ENCODE measurements at regions of chr6 and their contacts with region 1.

Region 1: GRCh38 chr6:138001750-138002349 is 105.4 kb downstream of the PERP start:
- DNase-seq: peak in 4 of 5 donors; percentile 54 to 69 (median 60)
- H3K4me3 ChIP-seq: no peak overlapping the region
- H3K27ac ChIP-seq: no peak overlapping the region
- H3K4me1 ChIP-seq: no peaks in the 10 kb centered on the region
- H3K27me3 ChIP-seq: no peaks in the 10 kb centered on the region
- CTCF ChIP-seq: peak; percentile 84

Region 2: DNA sequence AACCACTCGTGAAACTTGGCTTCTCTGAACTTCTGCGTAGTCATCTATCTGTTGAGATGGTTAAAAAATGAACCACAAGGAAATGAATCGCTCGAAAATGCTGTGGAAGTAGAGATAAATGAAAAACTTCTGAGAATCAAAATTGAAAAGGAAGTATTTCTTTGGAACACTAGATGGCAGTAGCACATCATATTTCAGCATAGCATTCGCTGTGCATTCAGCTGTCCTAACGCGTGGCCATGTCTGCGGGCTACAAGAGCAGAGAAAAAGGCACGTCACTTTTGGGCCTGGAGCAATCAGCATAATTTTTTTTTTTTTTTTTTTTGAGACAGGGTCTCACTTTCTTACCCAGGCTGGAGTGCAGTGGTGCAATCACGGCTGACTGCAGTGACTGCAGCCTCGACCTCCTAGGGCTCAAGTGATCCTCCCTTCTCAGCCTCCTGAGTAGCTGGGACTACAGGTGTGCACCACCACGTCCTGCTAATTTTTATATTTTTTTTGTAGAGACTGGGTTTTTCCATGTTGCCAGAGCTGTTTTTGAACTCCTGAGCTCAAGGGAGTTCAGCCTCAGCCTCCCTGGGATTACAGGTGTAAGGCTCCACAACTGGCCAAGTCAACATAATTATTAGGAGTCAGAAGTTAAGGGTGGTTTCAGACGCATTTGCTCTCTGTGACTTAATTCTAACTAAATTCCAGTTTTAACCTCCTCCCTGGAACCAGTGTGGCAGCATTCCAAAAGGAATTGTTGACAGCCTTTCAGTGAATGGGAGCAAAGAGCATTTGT is 114.2 kb after region 1 on chr6:
- intact Hi-C with region 1: loop called (anchors 10 kb)
- DNase-seq: peak; percentile 46 to 87 (median 76)
- H3K4me3 ChIP-seq: no peak overlapping the region
- H3K27ac ChIP-seq: no peak overlapping the region
- H3K4me1 ChIP-seq: no peaks in the 10 kb centered on the region
- H3K27me3 ChIP-seq: no peaks in the 10 kb centered on the region
- CTCF ChIP-seq: peak; percentile 85